Activated naive CD4-positive, alpha-beta T cell treated with anti-CD3 and anti-CD28 coated beads, Interleukin-2, amount 10 ng/mL, durations not matched to agents 7 days and 5 days (primary cell): ENCODE measurements at regions of chr5 and their contacts with region 1.

Region 1: GRCh38 chr5:151651997-151652645 is 34.6 kb downstream of the SPARC start:
- DNase-seq: peak; percentile 82
- H3K4me3 Mint-ChIP-seq: no peak overlapping the region
- H3K27ac Mint-ChIP-seq: no peak overlapping the region
- H3K4me1 Mint-ChIP-seq: no peaks in the 10 kb centered on the region
- H3K27me3 Mint-ChIP-seq: peaks cover 19% of the 10 kb centered on the region

Region 2: GRCh38 chr5:151447174-151448037 is 204.7 kb before region 1 on chr5 and contains the start of gene SLC36A1:
- CTCF ChIA-PET with region 1: interaction called, 67 read pairs
- DNase-seq: peak; percentile 93
- H3K4me3 Mint-ChIP-seq: peak within 1 kb of the TSS; percentile 80
- H3K27ac Mint-ChIP-seq: peak within 1 kb of the TSS; percentile 85
- H3K4me1 Mint-ChIP-seq: peaks cover 12% of the 10 kb centered on the region
- H3K27me3 Mint-ChIP-seq: peaks cover 22% of the 10 kb centered on the region

Region 3: GRCh38 chr5:151499501-151500035 is 152.6 kb before region 1 on chr5:
- CTCF ChIA-PET with region 1: interaction called, 13 read pairs
- DNase-seq: no peak
- H3K4me3 Mint-ChIP-seq: no peak overlapping the region
- H3K27ac Mint-ChIP-seq: no peak overlapping the region
- H3K4me1 Mint-ChIP-seq: peaks cover 5% of the 10 kb centered on the region
- H3K27me3 Mint-ChIP-seq: peaks cover 4% of the 10 kb centered on the region

Region 4: DNA sequence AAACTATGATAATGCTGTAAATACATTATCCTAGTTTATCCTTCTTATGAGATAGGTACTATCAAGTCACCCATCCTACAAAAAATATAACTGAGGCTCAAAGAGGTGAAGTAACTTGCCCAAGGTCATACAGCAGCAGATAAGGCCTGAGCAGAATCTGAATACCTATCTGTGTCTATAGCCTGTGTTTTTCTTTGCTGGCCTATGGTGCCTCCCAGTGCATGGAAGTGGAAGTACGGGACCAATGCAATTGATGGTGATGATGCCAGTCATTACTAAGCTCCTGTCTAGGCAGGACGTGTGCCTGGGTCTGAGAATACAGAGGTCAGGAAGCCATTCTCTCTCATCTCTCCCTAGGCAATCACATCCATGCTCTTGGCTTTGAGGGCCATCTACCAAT is 128.8 kb before region 1 on chr5:
- CTCF ChIA-PET with region 1: interaction called, 44 read pairs
- DNase-seq: peak; percentile 66
- H3K4me3 Mint-ChIP-seq: no peak overlapping the region
- H3K27ac Mint-ChIP-seq: no peak overlapping the region
- H3K4me1 Mint-ChIP-seq: peaks cover 2% of the 10 kb centered on the region
- H3K27me3 Mint-ChIP-seq: no peaks in the 10 kb centered on the region

Region 5: DNA sequence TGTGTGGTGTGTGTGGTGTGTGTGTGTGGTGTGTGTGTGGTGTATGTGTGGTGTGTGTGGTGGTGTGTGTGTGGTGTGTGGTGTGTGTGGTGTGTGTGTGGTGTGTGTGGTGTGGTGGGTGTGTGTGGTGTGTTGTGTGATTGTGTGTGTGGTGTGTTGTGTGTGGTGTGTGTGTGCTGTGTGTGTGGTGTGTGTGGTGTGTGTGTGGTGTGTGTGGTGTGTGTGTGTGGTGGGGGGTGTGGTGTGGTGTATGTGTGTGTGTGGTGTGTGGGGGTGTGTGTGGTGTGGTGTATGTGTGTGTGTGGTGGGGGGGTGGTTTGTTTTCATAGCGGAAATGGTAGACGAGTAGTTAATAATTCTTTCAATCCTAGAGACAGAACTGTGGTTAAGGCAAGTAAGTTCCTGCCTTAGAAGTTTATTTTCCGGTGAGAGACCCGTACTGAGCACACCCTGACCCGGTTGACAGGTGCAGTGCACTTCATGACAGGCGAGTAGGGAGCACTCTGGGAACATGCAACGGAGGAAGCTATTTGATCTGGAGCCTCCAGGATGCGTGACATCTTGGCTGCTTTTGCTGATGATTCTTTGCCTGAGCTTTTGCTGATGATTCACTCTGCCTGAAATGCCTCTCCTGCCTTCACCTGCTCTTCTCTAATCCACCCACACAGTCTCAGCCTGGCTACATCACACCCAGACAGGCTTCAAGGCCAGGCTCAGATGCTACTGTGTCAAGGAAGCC is 39.3 kb before region 1 on chr5:
- CTCF ChIA-PET with region 1: interaction called, 14 read pairs
- DNase-seq: peak; percentile 50
- H3K4me3 Mint-ChIP-seq: peak overlapping the region; percentile 31
- H3K27ac Mint-ChIP-seq: peak overlapping the region; percentile 75
- H3K4me1 Mint-ChIP-seq: peaks cover 26% of the 10 kb centered on the region
- H3K27me3 Mint-ChIP-seq: peaks cover 15% of the 10 kb centered on the region

Region 6: GRCh38 chr5:151740336-151740942 is 88.3 kb after region 1 on chr5:
- CTCF ChIA-PET with region 1: interaction called, 120 read pairs
- DNase-seq: peak; percentile 64
- H3K4me3 Mint-ChIP-seq: no peak overlapping the region
- H3K27ac Mint-ChIP-seq: peak overlapping the region; percentile 55
- H3K4me1 Mint-ChIP-seq: peaks cover 29% of the 10 kb centered on the region
- H3K27me3 Mint-ChIP-seq: no peaks in the 10 kb centered on the region

Region 7: GRCh38 chr5:151947925-151948608 is 295.9 kb after region 1 on chr5:
- CTCF ChIA-PET with region 1: no interaction called
- DNase-seq: no peak
- H3K4me3 Mint-ChIP-seq: no peak overlapping the region
- H3K27ac Mint-ChIP-seq: no peak overlapping the region
- H3K4me1 Mint-ChIP-seq: peaks cover 22% of the 10 kb centered on the region
- H3K27me3 Mint-ChIP-seq: peaks cover 7% of the 10 kb centered on the region